Posterior vena cava (tissue), 2 donors: ENCODE measurements at regions of chr15 and their contacts with region 1.

Region 1: DNA sequence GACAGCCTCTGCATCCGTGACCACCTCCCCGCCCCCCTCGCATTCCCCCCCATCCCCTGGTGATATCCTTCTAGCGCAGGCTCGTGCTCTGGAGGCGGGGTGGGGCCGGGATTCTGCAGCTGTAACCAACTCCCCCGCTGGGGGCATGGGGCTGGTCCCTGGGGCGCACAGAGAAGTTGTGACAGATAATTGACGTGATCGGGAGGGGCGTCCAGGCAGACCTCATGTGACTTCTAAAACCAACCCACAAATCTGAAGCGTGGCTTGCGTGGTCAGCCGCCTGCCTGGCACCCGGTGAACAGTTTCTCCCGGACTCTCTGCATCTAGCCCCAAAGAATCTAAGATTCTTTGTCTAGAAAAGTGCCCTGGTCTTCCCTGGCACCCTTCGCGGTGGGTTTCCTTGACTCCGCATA is 100.6 kb upstream of the IGF1R start:
- DNase-seq: peak; percentile 81

Region 2: DNA sequence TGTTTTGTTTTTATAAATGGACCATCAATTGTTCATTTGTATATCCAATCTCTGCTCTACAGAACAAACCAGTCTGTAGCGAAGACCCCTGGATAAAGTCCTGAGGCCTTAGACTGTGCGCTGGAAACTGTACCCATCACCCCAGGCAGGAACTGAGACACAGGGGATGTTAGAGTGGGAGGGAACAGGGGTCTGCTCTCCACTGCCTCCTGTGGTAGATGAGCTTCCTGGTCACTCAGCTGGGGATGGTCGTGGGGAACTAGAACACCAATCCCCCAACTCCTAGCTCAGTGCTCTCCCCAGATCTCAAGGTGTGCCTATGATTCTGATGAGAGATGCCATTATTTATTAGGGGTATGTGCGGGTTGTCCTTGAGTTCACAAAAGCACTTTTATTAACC is 239.6 kb before region 1 on chr15:
- intact Hi-C with region 1: no loop called
- DNase-seq: no peak

Region 3: GRCh38 chr15:98347001-98347400 is 200.7 kb before region 1 on chr15:
- intact Hi-C with region 1: no loop called
- DNase-seq: peak; percentile 82

Region 4: DNA sequence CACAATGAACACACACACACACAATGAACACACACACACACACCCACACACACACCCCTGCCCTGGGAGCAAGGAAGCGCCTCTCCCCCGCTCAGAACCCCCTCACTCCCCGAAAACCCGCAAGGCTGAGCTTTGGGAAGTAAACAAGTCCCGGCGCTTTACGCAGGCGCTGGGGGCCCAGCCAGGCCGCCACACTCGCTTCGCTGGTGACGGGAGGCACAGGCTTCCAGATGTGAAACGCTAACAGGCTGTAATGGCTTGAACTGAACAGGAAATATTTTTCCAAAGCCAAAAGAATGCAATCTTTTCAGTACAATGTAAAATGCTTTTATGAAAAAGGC is 22.1 kb before region 1 on chr15:
- intact Hi-C with region 1: loop called in 1 of 2 experiments (anchors 1 kb)
- DNase-seq: peak; percentile 73

Region 5: DNA sequence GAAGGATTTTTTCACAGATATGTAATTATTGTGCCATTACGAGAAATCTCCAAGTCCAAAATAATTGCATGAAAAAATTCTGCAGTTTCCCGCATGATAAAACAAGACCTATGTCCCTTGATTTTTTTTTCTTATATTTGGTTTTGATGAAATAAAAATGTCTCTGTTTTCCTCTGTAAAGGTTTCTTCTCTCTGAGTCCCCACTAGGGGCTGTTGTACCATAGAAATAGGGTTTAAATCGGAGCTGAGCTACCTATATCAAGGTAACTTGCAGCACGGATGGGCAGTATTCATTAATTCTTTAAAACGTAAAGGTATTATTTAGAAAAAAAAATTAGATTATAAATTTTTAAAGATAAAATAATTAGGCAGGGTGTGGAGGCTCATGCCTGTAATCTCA is 34.0 kb after region 1 on chr15:
- intact Hi-C with region 1: no loop called
- DNase-seq: no peak

Region 6: DNA sequence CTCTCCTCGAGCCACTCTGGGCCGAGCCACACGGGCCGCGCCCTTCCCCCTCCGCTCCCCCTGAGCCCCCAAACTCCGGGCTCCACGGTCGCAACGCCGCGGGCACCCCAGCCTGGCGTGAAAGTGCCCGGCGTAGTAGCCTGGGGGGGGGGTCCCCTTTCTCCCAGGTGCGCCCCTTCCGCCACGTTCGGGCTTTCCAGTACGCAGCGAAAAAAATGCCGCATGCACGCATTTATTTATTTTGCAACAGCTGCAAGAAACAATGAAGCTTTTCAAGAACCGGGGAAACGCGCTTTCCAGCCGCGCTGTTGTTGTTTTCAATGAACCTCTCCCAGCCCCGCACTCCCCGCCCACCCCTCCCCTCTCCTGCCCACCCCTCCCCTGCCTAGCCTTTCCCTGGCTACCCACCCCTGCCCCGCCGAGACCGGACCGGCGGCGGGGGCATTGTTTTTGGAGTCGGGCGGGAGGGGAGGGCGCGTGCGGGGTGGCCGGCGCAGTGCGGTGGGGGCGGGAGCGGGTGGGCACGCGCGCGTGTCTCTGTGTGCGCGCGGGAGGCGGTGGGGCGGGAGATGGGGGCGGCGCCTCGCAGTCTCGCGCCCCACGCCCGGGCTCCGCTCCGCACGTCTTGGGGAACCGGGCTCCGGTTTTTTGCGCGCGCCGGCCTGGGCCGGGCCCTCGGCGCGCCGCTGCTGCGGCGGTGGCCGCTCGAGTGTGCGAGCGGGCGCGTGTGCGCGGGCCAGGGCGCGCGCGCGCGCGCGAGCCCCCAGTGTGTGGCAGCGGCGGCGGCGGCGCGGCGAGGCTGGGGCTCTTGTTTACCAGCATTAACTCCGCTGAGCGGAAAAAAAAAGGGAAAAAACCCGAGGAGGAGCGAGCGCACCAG is 100.3 kb after region 1 on chr15 and contains the start of gene IGF1R:
- intact Hi-C with region 1: no loop called
- DNase-seq: peak; percentile 96
- total RNA-seq, gene IGF1R: 30.7 to 50.1 TPM